Activated T-helper 1 cell treated with anti-CD3 and anti-CD28 coated beads, Interleukin-12 subunit alpha, Interleukin-12 subunit beta, Interleukin-2, Interleukin-4 antibody, amounts not matched to agents 30 ng/mL and 10 ng/mL and 1 ng/mL, durations not matched to agents 14 hours and 24 hours and 36 hours (primary cell): ENCODE measurements at regions of chr15 and their contacts with region 1.

Region 1: GRCh38 chr15:90686435-90687218 is 30.5 kb upstream of the BLM start:
- DNase-seq: peak; percentile 48
- H3K4me3 Mint-ChIP-seq: peak overlapping the region; percentile 9
- H3K27ac Mint-ChIP-seq: peak overlapping the region; percentile 99
- H3K4me1 Mint-ChIP-seq: peaks cover 50% of the 10 kb centered on the region
- H3K27me3 Mint-ChIP-seq: no peaks in the 10 kb centered on the region

Region 2: GRCh38 chr15:90412356-90413194 is 274.1 kb before region 1 on chr15:
- intact Hi-C with region 1: loop called (anchors 5 kb)
- DNase-seq: no peak
- H3K4me3 Mint-ChIP-seq: peak overlapping the region; percentile 13
- H3K27ac Mint-ChIP-seq: peak overlapping the region; percentile 74
- H3K4me1 Mint-ChIP-seq: peaks cover 79% of the 10 kb centered on the region
- H3K27me3 Mint-ChIP-seq: no peaks in the 10 kb centered on the region

Region 3: GRCh38 chr15:90660195-90660998 is 26.2 kb before region 1 on chr15:
- intact Hi-C with region 1: loop called (anchors 1 kb)
- DNase-seq: peak; percentile 71
- H3K4me3 Mint-ChIP-seq: peak overlapping the region; percentile 77
- H3K27ac Mint-ChIP-seq: peak overlapping the region; percentile 96
- H3K4me1 Mint-ChIP-seq: peaks cover 81% of the 10 kb centered on the region
- H3K27me3 Mint-ChIP-seq: peaks cover 1% of the 10 kb centered on the region